A549 (cell line): ENCODE measurements at regions of chr17 and their contacts with region 1.

Region 1: DNA sequence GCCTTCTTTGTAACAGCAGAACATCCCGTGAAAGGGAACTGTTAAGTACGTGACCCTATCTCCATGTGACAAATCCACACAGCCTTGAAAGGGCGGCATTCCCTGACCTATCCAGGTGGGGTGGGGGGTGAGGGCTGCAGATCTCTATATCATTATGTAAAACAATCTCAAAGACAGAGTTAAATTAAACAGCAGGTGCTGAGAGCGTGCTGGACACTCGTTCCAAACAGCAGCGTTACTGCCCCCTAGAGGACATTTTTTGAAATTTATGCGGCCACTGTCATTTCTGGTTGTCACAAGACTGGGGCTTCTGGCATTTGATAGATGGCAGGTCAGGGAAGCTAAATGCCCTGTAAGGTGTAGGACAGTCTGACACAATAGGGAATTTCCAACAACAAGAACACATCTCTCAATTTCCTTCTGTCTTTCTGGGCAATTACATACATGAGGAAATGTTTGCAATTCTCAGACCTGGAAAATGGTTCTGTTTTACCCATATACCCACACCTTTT is 6.7 kb upstream of the SLC25A39 start:
- DNase-seq: peak; percentile 84
- ATAC-seq: peak; percentile 52 to 57
- H3K4me3 ChIP-seq: no peak overlapping the region
- H3K27ac ChIP-seq: no peak overlapping the region
- H3K4me1 ChIP-seq: peaks cover 8% of the 10 kb centered on the region
- CTCF ChIP-seq: peak; percentile 96
- EP300 ChIP-seq: no peak
- POLR2A ChIP-seq: no peak
- RAD21 ChIP-seq: peak; percentile 74 to 86

Region 2: GRCh38 chr17:44199553-44200477 is 131.5 kb before region 1 on chr17 and contains the start of gene ATXN7L3:
- CTCF ChIA-PET with region 1: interaction called, 12 read pairs
- POLR2A ChIA-PET with region 1: interaction called, 5 read pairs
- DNase-seq: peak; percentile 99
- ATAC-seq: peak; percentile 66 to 87
- H3K4me3 ChIP-seq: peak within 1 kb of the TSS; percentile 87
- H3K27ac ChIP-seq: peak within 1 kb of the TSS; percentile 98 to 100
- H3K4me1 ChIP-seq: peaks cover 35% of the 10 kb centered on the region
- CTCF ChIP-seq: no peak
- EP300 ChIP-seq: 0 out of 5 replicates have a peak, but pooled peaks of 1 of the 2 experiments have one; percentile 29
- POLR2A ChIP-seq: peak; percentile 40; the same call in 1 of the 2 replicates
- RAD21 ChIP-seq: no peak
- polyA plus RNA-seq, gene ATXN7L3: 65.7 and 72.7 TPM in 2 replicates

Region 3: GRCh38 chr17:44293509-44294226 is 37.6 kb before region 1 on chr17:
- CTCF ChIA-PET with region 1: interaction called, 10 read pairs
- POLR2A ChIA-PET with region 1: no interaction called
- DNase-seq: no peak
- ATAC-seq: no peak
- H3K4me3 ChIP-seq: no peak overlapping the region
- H3K27ac ChIP-seq: no peak overlapping the region
- H3K4me1 ChIP-seq: no peaks in the 10 kb centered on the region
- CTCF ChIP-seq: no peak
- EP300 ChIP-seq: no peak
- POLR2A ChIP-seq: no peak
- RAD21 ChIP-seq: no peak

Region 4: DNA sequence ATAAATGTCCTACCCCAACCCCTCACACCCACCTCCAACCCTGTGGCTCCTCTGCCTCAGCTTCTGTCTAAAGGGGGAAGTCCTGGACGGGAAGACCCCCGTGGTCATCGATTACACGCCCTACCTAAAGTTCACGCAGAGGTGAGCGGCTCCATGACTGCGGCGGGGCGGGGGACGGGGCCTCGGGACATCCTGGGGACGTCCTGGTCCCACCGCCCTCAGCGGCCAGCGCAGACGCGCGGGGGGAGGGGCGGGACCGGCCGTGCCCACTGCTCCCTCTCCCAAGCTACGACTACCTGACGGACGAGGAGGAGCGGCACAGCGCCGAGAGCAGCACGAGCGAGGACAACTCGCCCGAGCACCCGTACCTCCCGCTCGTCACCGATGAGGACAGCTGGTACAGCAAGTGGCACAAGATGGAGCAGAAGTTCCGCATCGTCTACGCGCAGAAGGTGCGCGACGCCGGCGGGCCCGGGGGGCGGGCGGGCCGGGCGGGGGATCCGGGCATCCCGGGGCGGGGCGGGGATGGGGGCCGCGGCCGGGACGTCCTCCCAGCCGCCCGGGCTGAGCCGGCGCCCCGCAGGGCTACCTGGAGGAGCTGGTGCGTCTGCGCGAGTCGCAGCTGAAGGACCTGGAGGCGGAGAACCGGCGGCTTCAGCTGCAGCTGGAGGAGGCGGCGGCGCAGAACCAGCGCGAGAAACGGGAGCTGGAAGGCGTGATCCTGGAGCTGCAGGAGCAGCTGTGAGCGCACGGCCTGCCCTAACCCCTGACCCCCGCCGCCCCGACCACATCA is 16.2 kb before region 1 on chr17:
- CTCF ChIA-PET with region 1: interaction called, 72 read pairs
- POLR2A ChIA-PET with region 1: interaction called, 4 read pairs
- DNase-seq: peak; percentile 73 to 93
- ATAC-seq: peak; percentile 64 to 73
- H3K4me3 ChIP-seq: peak overlapping the region; percentile 63
- H3K27ac ChIP-seq: peak overlapping the region; percentile 51 to 78; a peak in 5 of 6 replicates
- H3K4me1 ChIP-seq: 0 out of 3 replicates have a peak, but pooled peaks cover 4% of the 10 kb centered on the region
- CTCF ChIP-seq: no peak
- EP300 ChIP-seq: no peak
- POLR2A ChIP-seq: no peak
- RAD21 ChIP-seq: no peak

Region 5: DNA sequence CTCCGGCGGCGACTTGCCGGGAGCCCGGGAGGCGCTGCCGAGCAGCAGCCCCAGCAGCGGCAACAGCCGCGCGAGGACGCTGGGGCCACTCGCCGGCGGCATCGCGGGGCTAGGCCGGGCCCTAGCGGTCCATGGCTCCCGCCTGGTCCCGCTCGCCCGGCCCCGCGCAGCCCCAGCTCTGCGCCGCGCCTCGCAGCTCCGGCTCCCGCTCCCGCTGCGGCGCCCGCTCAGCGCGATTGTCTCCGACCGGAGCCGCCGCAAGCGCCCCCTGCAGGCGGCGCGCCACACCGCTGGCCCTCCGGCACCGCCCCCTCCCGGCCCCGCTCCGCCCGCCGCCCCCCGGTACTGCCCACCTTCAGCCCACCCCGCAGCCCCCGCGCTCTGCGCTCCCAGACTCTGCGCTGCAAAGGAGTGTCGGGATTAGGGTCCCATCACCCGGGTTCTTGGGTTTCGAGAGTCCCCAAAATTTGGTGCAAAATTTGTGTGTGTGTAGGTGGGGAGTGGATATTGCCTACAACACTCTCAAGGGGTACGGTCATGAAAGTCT is 32.4 kb after region 1 on chr17 and contains the start of gene FAM171A2:
- CTCF ChIA-PET with region 1: interaction called, 27 read pairs
- POLR2A ChIA-PET with region 1: no interaction called
- DNase-seq: peak; percentile 66 to 74
- ATAC-seq: peak; percentile 76 to 83
- H3K4me3 ChIP-seq: peak within 1 kb of the TSS; percentile 77
- H3K27ac ChIP-seq: peak within 1 kb of the TSS; percentile 76 to 92
- H3K4me1 ChIP-seq: peaks cover 20% of the 10 kb centered on the region
- CTCF ChIP-seq: peak; percentile 98
- EP300 ChIP-seq: no peak
- POLR2A ChIP-seq: peak; percentile 36
- RAD21 ChIP-seq: peak in 1 of 2 experiments; percentile 42; a peak in 2 of 5 replicates
- polyA plus RNA-seq, gene FAM171A2: 1.8 and 2.7 TPM in 2 replicates

Region 6: GRCh38 chr17:44804302-44805089 is 473.2 kb after region 1 on chr17:
- CTCF ChIA-PET with region 1: no interaction called
- POLR2A ChIA-PET with region 1: no interaction called
- DNase-seq: no peak
- ATAC-seq: no peak; a peak in 1 of 6 replicates
- H3K4me3 ChIP-seq: no peak overlapping the region
- H3K27ac ChIP-seq: no peak overlapping the region
- H3K4me1 ChIP-seq: peaks cover 8% of the 10 kb centered on the region; the same call in 2 of the 3 replicates
- CTCF ChIP-seq: no peak
- EP300 ChIP-seq: no peak
- POLR2A ChIP-seq: no peak
- RAD21 ChIP-seq: no peak